ENCODE measurements at regions of chr1 and their contacts with region 1.

Region 1: DNA sequence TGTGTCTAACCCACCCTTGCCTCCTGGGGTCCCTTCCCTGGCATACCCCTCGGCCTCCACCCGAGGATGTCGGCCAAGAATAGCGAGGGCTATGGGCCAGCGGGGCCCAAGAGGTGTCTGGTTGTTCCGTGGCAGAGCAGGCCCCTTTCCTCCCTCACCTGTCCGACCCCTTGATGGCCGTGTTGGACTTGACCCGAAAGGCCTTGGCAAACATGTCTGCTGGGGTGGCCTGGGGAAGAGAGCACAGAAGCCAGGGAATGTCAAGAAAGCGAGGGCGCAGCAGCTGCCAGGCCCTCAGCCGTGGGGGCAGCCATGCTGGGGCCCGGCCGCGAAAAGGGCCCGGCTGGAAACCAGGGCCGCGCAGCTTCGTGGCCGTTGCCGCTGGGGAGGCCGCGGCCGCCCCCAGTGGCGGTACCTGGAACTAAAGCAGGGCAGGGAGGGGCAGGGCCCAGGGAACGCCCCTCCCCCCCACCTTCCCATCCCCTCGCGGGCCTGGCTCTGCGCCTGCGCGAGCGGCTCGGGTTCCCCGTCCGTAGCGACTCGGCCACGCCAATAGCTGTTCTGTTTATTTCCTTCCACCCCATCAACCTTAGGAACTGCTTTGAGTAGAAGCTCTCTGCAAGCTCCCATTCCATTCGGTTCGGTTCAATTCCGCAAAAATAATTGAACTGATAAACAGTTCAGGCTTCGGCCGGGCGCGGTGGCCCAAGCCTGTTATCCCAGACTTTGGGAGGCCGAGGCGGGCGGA is at the start of gene EIF2D:
- DNase-seq: peak; percentile 88 to 98 (median 94)
- ATAC-seq: peak; percentile 100
- H3K4me3 ChIP-seq: peak within 1 kb of the TSS; percentile 97
- H3K4me3 Mint-ChIP-seq: peak within 1 kb of the TSS; percentile 89 to 95 (median 93)
- H3K27ac ChIP-seq: peak within 1 kb of the TSS; percentile 88
- H3K27ac Mint-ChIP-seq: peak within 1 kb of the TSS; percentile 92 to 99 (median 94)
- H3K4me1 ChIP-seq: peaks cover 8 to 10% of the 10 kb centered on the region in 2 donors
- H3K4me1 Mint-ChIP-seq: peaks cover 7 to 35% (median 30%) of the 10 kb centered on the region in 7 donors
- H3K27me3 ChIP-seq: no peaks in the 10 kb centered on the region
- H3K27me3 Mint-ChIP-seq: peaks cover 0 to 17% (median 0%) of the 10 kb centered on the region in 5 donors
- total RNA-seq, gene EIF2D: 38.7 to 73.0 (median 59.6) TPM

Region 2: GRCh38 chr1:206507284-206508129 is 104.8 kb before region 1 on chr1 and contains the start of gene RASSF5:
- CTCF ChIA-PET with region 1: no interaction called
- POLR2A ChIA-PET with region 1: interaction called, 4 read pairs
- intact Hi-C with region 1: loop called in 1 of 2 experiments (anchors 1 kb)
- DNase-seq: peak; percentile 64 to 86 (median 74)
- ATAC-seq: peak; percentile 88
- H3K4me3 ChIP-seq: peak within 1 kb of the TSS; percentile 58
- H3K4me3 Mint-ChIP-seq: peak within 1 kb of the TSS; percentile 72 to 90 (median 82)
- H3K27ac ChIP-seq: peak within 1 kb of the TSS; percentile 41
- H3K27ac Mint-ChIP-seq: peak within 1 kb of the TSS in 8 of 9 donors; percentile 28 to 69 (median 51)
- H3K4me1 ChIP-seq: peaks cover 8 to 29% of the 10 kb centered on the region in 2 donors
- H3K4me1 Mint-ChIP-seq: peaks cover 8 to 59% (median 29%) of the 10 kb centered on the region in 7 donors
- H3K27me3 ChIP-seq: no peaks in the 10 kb centered on the region
- H3K27me3 Mint-ChIP-seq: peaks cover 12 to 30% (median 18%) of the 10 kb centered on the region in 5 donors
- total RNA-seq, gene RASSF5: 155 to 240 (median 218) TPM

Region 3: DNA sequence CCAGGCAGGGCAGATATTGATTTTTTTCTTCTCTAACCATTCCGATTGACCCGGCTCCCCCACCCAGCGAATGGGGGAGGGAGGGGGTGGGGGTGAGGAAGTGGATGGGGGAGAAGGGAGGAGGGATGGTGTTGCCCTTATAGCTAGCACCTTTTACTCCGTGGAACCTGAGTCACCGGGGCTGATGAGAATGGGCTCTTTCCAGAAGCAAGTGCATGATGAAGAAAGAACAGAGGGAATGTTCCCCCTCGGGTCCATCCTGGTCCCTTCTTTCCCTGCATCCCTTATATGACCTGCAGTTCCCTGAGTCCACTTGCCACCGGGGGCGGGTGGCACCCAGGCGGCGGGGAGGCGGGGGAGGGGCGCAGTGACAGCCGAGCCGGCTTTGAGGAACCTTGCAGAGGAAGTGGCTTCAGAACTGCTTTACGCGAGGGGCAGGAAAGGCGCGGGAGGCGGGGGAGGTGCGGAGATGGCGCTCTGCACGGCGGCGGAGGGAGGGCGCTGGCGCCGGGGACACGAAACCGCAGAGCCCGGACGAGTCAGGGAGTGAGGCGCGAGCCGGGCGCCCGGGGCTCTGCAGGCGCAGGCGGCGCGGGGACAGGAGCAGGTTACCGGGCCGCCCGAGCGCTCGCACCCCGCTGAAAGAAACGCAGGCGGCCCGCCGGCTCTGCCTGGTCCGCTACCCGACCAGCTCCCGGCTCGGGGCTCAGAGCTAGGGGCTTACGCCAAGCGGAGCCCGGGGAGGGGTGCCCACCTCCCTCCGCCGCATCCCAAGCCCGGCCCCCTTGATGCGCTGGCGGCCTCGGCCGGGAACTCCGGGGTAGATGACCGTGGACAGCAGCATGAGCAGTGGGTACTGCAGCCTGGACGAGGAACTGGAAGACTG is 55.3 kb before region 1 on chr1:
- CTCF ChIA-PET with region 1: interaction called, 5 read pairs
- POLR2A ChIA-PET with region 1: interaction called, 6 read pairs
- intact Hi-C with region 1: loop called (anchors 1 to 2 kb)
- DNase-seq: peak; percentile 78 to 93 (median 88)
- ATAC-seq: peak; percentile 86
- H3K4me3 ChIP-seq: peak overlapping the region; percentile 90
- H3K4me3 Mint-ChIP-seq: peak overlapping the region; percentile 77 to 99 (median 96)
- H3K27ac ChIP-seq: peak overlapping the region; percentile 90
- H3K27ac Mint-ChIP-seq: peak overlapping the region; percentile 86 to 100 (median 94)
- H3K4me1 ChIP-seq: peaks cover 61 to 66% of the 10 kb centered on the region in 2 donors
- H3K4me1 Mint-ChIP-seq: peaks cover 59 to 75% (median 70%) of the 10 kb centered on the region in 7 donors
- H3K27me3 ChIP-seq: no peaks in the 10 kb centered on the region
- H3K27me3 Mint-ChIP-seq: no peaks in the 10 kb centered on the region

Region 4: GRCh38 chr1:206590025-206590758 is 22.1 kb before region 1 on chr1:
- CTCF ChIA-PET with region 1: interaction called, 4 read pairs
- POLR2A ChIA-PET with region 1: interaction called, 3 read pairs
- intact Hi-C with region 1: loop called in 1 of 2 experiments (anchors 1 kb)
- DNase-seq: peak in 3 of 9 donors; percentile 31 to 60 (median 36)
- ATAC-seq: peak; percentile 84
- H3K4me3 ChIP-seq: no peak overlapping the region
- H3K4me3 Mint-ChIP-seq: peak overlapping the region in 2 of 10 donors; percentile 70 to 75
- H3K27ac ChIP-seq: peak overlapping the region; percentile 28
- H3K27ac Mint-ChIP-seq: peak overlapping the region; percentile 27 to 91 (median 80)
- H3K4me1 ChIP-seq: peaks cover 7 to 19% of the 10 kb centered on the region in 2 donors
- H3K4me1 Mint-ChIP-seq: peaks cover 21 to 70% (median 45%) of the 10 kb centered on the region in 7 donors
- H3K27me3 ChIP-seq: no peaks in the 10 kb centered on the region
- H3K27me3 Mint-ChIP-seq: no peaks in the 10 kb centered on the region

Region 5: DNA sequence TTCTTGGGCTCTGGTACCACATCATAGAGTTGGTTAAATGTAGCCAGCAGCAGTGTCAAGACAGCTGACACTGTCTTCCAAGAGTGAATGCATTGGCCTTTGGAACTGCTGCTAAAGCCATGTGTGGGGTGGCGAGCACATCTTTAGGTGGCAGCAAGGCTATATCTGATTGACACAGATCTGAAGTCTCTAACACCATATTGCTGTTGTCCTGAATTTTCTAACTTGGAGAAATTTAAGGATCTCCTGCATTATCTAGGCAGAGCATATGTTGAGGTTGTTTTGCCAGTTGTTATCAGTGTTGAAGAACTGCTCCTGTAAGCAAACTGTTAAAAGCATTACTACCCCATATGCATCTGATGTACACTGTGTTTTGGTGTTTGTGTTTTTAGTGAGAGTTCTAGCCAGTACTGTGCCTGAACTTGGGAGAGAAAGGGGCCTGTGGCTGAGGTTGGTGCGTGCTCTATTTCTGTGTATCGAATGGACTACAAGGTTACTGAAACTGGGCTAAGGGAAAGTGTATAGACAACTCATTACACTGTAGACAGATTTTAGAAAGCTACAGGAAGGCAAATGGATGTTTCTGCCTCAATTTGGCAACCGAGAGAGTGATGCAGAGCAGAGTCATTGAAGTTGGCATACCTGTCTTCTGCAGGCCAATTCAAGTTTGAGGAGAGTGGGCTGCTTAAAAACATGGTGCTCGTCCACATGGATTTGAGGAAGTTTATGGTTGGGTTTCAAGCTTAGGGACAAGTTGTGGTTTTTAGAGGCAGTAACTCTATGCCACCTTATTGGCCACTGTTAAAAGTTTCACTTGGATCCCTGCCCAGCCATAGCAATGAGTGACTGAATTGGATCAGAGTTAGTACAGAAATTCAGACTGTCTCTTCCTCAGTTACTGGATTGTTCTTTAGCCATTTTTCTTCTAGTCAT is 39.9 kb after region 1 on chr1:
- CTCF ChIA-PET with region 1: no interaction called
- POLR2A ChIA-PET with region 1: no interaction called
- intact Hi-C with region 1: no loop called
- DNase-seq: no peak
- ATAC-seq: no peak
- H3K4me3 ChIP-seq: no peak overlapping the region
- H3K4me3 Mint-ChIP-seq: no peak overlapping the region
- H3K27ac ChIP-seq: no peak overlapping the region
- H3K27ac Mint-ChIP-seq: no peak overlapping the region
- H3K4me1 ChIP-seq: no peaks in the 10 kb centered on the region
- H3K4me1 Mint-ChIP-seq: peaks cover 0 to 2% (median 0%) of the 10 kb centered on the region in 7 donors
- H3K27me3 ChIP-seq: no peaks in the 10 kb centered on the region
- H3K27me3 Mint-ChIP-seq: peaks cover under 1 to 9% (median 4%) of the 10 kb centered on the region in 5 donors

Region 6: DNA sequence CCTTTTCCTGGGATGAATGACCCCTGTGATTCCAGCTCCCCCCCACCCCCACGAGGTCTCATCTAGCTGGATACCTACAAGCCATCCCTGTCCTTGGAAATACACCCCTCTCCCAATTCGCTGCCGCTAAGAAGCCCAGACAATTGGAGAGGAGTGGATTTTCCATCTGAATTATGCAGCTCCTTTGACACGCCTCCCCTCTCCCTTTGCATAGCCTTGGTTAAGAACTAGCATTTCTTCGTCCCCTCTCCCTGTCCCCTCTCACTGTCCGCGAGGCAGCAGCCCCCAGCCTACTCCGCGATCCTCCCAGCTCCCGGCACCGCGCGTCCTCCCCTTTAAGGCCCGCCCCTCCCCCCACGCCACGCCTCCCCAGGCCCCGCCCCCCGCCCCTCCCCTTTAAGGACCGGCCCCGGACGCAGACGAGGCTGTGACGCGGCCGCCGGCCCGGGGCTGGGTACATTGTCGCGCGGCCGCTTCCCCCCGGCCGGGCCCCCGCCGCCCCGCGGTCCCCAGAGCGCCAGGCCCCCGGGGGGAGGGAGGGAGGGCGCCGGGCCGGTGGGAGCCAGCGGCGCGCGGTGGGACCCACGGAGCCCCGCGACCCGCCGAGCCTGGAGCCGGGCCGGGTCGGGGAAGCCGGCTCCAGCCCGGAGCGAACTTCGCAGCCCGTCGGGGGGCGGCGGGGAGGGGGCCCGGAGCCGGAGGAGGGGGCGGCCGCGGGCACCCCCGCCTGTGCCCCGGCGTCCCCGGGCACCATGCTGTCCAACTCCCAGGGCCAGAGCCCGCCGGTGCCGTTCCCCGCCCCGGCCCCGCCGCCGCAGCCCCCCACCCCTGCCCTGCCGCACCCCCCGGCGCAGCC is 72.4 kb after region 1 on chr1 and contains the start of gene MAPKAPK2:
- CTCF ChIA-PET with region 1: no interaction called
- POLR2A ChIA-PET with region 1: no interaction called
- intact Hi-C with region 1: loop called (anchors 1 kb)
- DNase-seq: peak; percentile 52 to 80 (median 71)
- ATAC-seq: peak; percentile 85
- H3K4me3 ChIP-seq: peak within 1 kb of the TSS; percentile 66
- H3K4me3 Mint-ChIP-seq: peak within 1 kb of the TSS; percentile 92 to 100 (median 96)
- H3K27ac ChIP-seq: peak within 1 kb of the TSS; percentile 90
- H3K27ac Mint-ChIP-seq: peak within 1 kb of the TSS; percentile 90 to 98 (median 95)
- H3K4me1 ChIP-seq: peaks cover 12 to 21% of the 10 kb centered on the region in 2 donors
- H3K4me1 Mint-ChIP-seq: peaks cover 23 to 49% (median 38%) of the 10 kb centered on the region in 7 donors
- H3K27me3 ChIP-seq: no peaks in the 10 kb centered on the region
- H3K27me3 Mint-ChIP-seq: peaks cover 0 to 17% (median 0%) of the 10 kb centered on the region in 5 donors
- total RNA-seq, gene MAPKAPK2: 49.6 to 123 (median 80.5) TPM

Region 7: DNA sequence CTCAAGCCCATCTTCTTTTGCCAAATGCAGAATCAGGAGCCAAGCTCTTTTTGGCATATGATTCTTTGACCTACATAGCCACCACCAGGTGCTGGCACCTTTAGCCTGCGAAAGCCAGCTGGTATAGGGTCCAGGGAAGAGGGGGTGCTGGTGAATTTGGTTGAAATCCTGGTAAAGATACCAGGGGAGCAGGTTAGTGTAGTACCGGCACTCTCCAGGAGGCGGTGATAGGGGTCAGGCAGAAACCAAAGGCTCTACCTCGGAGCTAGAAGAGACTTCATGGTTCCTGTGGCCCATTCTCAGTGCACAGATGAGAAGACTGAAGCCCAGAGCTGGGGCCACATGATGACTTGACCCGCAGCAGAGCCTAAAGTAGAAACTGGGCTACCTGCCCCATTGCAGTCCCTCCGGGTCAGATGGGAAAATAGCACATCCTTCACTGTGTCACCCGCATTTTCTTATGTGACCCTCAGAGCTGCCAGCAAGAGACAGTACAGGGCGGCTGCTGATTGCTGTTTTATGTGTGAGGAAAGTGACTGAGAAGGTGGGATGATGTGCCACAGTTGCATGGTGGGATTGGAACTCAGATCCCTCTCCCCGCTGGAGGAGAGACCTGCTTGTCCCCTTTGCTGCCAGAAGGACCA is 122.3 kb after region 1 on chr1:
- CTCF ChIA-PET with region 1: no interaction called
- POLR2A ChIA-PET with region 1: no interaction called
- intact Hi-C with region 1: no loop called
- DNase-seq: peak; percentile 63 to 87 (median 76)
- ATAC-seq: peak; percentile 80
- H3K4me3 ChIP-seq: no peak overlapping the region
- H3K4me3 Mint-ChIP-seq: peak overlapping the region in 4 of 10 donors; percentile 7 to 54 (median 26)
- H3K27ac ChIP-seq: no peak overlapping the region
- H3K27ac Mint-ChIP-seq: peak overlapping the region; percentile 53 to 95 (median 87)
- H3K4me1 ChIP-seq: peaks cover 49 to 50% of the 10 kb centered on the region in 2 donors
- H3K4me1 Mint-ChIP-seq: peaks cover 40 to 60% (median 56%) of the 10 kb centered on the region in 7 donors
- H3K27me3 ChIP-seq: no peaks in the 10 kb centered on the region
- H3K27me3 Mint-ChIP-seq: no peaks in the 10 kb centered on the region

Measured in naive thymus-derived CD4-positive, alpha-beta T cell (primary cell).